ENCODE measurements at regions of chrX and their contacts with region 1.

Region 1: GRCh38 chrX:47193475-47194193 is at the start of gene UBA1:
- DNase-seq: peak; percentile 93
- ATAC-seq: peak; percentile 75
- H3K4me3 ChIP-seq: peak within 1 kb of the TSS; percentile 71 to 96 (median 76)
- H3K4me3 Mint-ChIP-seq: peak within 1 kb of the TSS; percentile 98
- H3K27ac ChIP-seq: peak within 1 kb of the TSS; percentile 83 to 95
- H3K27ac Mint-ChIP-seq: peak within 1 kb of the TSS; percentile 99
- H3K4me1 ChIP-seq: peaks cover 48 to 60% of the 10 kb centered on the region in 2 donors
- H3K4me1 Mint-ChIP-seq: peaks cover 63% of the 10 kb centered on the region
- H3K27me3 ChIP-seq: no peaks in the 10 kb centered on the region
- H3K27me3 Mint-ChIP-seq: no peaks in the 10 kb centered on the region
- CTCF ChIP-seq: peak; percentile 58
- total RNA-seq, gene UBA1: 166 and 173 TPM in 2 replicates

Region 2: DNA sequence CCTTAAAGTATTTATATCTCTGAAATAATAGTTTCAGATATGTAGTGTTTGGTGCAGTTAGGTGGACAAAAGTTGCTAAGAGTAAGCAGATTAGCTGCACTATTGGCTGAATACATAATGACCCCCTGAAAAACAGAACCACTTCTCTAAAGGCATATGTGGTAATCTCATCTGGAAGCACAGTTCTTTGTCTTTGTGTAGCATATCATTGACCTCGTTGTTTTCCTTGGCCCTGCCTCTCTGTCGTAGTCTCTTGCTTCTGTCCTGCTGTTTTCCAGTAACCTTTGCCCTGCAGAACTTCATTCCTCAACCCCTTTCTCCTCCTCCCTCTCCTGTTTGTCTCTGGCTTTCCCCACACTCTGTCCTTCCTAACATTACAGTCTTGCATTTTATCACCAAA is 240.0 kb before region 1 on chrX:
- CTCF ChIA-PET with region 1: no interaction called
- POLR2A ChIA-PET with region 1: no interaction called
- intact Hi-C with region 1: no loop called
- DNase-seq: peak; percentile 36
- ATAC-seq: peak; percentile 54
- H3K4me3 ChIP-seq: peak overlapping the region in 1 of 5 experiments; percentile 31
- H3K4me3 Mint-ChIP-seq: peak overlapping the region; percentile 76
- H3K27ac ChIP-seq: peak overlapping the region; percentile 65 to 74
- H3K27ac Mint-ChIP-seq: peak overlapping the region; percentile 85
- H3K4me1 ChIP-seq: peaks cover 33 to 53% of the 10 kb centered on the region in 2 donors
- H3K4me1 Mint-ChIP-seq: peaks cover 64% of the 10 kb centered on the region
- H3K27me3 ChIP-seq: no peaks in the 10 kb centered on the region
- H3K27me3 Mint-ChIP-seq: no peaks in the 10 kb centered on the region
- CTCF ChIP-seq: no peak

Region 3: DNA sequence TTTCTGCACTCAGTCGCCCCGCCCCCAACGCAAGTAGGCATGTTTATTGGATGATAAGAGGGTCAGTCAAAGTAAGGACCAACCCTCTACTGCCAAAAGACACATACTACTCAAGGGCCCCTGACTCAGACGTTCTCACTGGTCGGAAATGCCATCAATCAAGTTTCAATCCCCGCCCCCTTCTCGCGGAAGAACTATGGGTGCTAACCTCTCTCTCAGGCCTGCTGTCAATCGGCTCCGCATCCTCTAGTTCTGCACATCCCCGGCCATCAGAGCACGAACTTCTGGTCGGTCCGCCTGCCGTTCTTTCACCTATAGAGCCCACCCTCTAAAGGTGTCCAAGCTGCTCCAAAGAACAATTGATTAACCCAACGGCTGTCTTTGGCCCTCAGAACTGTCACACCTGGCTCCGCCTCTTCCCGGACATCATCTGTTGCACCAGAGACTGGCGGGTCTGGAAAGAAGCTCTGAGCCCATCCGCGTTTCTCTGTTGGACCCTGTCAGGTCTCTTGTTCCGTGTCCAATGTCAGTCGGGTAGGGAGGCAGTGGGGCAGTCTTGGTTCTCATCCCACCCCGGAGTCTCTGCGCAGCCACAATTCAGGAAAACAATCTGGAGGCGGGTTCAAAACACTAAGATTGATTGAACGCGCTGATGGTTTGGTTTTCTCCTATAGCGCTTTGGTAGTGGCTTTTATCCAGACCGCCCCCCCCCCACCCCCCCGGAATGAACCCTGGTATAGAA is 64.3 kb before region 1 on chrX:
- CTCF ChIA-PET with region 1: no interaction called
- POLR2A ChIA-PET with region 1: no interaction called
- intact Hi-C with region 1: loop called (anchors 1 kb)
- DNase-seq: peak; percentile 94
- ATAC-seq: peak; percentile 98
- H3K4me3 ChIP-seq: peak overlapping the region; percentile 32 to 71 (median 68)
- H3K4me3 Mint-ChIP-seq: peak overlapping the region; percentile 97
- H3K27ac ChIP-seq: peak overlapping the region; percentile 47
- H3K27ac Mint-ChIP-seq: peak overlapping the region; percentile 93
- H3K4me1 ChIP-seq: peaks cover 0 to 6% of the 10 kb centered on the region in 2 donors
- H3K4me1 Mint-ChIP-seq: peaks cover 3% of the 10 kb centered on the region
- H3K27me3 ChIP-seq: no peaks in the 10 kb centered on the region
- H3K27me3 Mint-ChIP-seq: no peaks in the 10 kb centered on the region
- CTCF ChIP-seq: no peak

Region 4: DNA sequence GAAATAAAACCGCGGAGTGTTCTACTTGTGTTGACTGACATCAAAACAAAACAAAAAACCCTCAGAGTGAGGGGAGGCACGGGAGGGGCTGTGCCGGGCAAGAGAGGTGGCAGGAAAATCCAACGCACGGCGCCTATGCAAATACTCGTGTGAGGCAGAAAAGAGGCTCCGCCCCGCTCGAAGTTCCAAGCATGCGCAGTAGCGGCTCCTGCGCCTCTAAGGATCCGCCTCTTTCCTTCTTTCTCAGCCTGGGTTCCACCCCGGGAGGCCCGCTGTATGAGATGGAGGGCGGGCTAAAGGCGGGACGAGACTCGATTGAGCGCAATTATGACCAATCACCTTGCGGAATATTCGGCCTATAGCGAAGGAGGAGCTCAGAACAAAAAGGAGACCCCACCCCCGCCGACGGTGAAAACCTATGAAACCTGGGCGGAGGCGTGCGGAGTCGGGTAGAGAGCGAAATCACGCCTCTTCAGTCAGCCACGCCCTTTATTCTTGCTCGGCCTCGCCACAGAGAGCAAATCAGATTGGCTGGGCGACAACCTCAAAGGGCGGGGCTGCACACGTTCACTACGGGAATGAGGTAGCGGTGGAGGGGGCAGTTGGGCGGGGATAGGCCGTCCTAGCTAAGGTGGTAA is 24.1 kb after region 1 on chrX:
- CTCF ChIA-PET with region 1: interaction called, 3 read pairs
- POLR2A ChIA-PET with region 1: interaction called, 4 read pairs
- intact Hi-C with region 1: loop called (anchors 1 kb)
- DNase-seq: peak; percentile 96
- ATAC-seq: peak; percentile 80
- H3K4me3 ChIP-seq: peak overlapping the region; percentile 69 to 83 (median 80)
- H3K4me3 Mint-ChIP-seq: peak overlapping the region; percentile 96
- H3K27ac ChIP-seq: peak overlapping the region; percentile 94 to 99
- H3K27ac Mint-ChIP-seq: peak overlapping the region; percentile 100
- H3K4me1 ChIP-seq: peaks cover 26 to 27% of the 10 kb centered on the region in 2 donors
- H3K4me1 Mint-ChIP-seq: peaks cover 39% of the 10 kb centered on the region
- H3K27me3 ChIP-seq: no peaks in the 10 kb centered on the region
- H3K27me3 Mint-ChIP-seq: no peaks in the 10 kb centered on the region
- CTCF ChIP-seq: no peak

Region 5: DNA sequence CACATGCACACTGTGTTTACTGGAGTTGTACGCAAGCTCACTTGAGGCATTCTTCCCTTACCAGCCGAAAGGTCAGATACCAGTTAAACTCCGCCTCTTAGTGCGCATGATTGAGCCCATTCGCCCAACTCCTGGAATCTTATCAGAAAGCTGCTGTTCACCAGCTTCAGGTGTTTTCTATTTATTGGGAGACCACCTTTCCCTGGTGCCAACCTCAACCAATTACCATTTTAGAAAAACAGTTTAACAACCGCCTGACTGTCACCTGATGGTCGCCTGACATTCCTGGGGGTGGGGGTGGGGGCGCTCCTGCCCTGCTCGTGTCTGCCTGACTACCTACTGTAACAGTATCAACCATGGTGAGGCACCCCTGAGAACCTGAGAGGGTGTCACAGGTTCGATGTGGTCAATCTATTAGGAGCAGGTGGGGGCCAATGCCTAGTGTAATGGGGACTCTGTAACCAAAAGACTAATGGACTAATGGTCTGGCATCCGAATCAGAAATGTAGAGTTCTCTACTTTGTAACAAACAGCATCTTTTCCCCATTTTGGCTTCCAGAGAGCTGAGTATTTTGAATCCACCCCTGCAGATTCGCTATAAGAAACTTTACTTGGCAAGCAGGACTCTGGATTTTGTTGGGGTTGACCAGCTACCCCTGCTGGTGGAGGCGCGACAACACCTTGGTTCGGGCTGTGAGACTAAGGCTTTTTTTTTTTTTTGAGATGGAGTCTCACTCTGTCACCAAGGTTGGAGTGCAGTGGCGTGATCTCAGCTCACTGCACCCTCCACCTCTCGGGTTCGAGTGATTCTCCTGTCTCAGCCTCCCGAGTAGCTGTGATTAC is 118.5 kb after region 1 on chrX:
- CTCF ChIA-PET with region 1: no interaction called
- POLR2A ChIA-PET with region 1: no interaction called
- intact Hi-C with region 1: loop called (anchors 5 kb)
- DNase-seq: peak; percentile 32
- ATAC-seq: no peak
- H3K4me3 ChIP-seq: no peak overlapping the region
- H3K4me3 Mint-ChIP-seq: no peak overlapping the region
- H3K27ac ChIP-seq: no peak overlapping the region
- H3K27ac Mint-ChIP-seq: no peak overlapping the region
- H3K4me1 ChIP-seq: no peaks in the 10 kb centered on the region
- H3K4me1 Mint-ChIP-seq: no peaks in the 10 kb centered on the region
- H3K27me3 ChIP-seq: no peaks in the 10 kb centered on the region
- H3K27me3 Mint-ChIP-seq: no peaks in the 10 kb centered on the region
- CTCF ChIP-seq: peak; percentile 13

Region 6: DNA sequence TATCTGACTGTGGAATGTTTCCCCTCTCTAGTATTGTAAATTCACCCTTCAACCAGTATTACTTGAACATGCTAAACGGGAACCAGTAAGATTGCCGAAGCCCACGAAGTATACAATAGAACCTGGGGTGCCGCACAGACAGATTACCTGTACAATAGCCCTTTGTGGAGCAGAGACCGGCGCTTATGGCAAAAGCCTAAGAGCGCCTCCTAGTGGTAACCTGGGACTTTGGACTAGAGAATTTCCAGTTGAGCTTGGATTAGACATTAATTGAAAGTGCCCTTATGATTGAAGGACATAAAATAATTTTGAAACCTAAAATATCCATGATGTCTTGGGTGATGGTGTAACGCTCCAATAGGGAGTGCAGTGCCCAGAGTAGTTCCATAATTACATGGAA is 190.9 kb after region 1 on chrX:
- CTCF ChIA-PET with region 1: interaction called, 22 read pairs
- POLR2A ChIA-PET with region 1: interaction called, 4 read pairs
- intact Hi-C with region 1: loop called (anchors 1 kb)
- DNase-seq: peak; percentile 80
- ATAC-seq: peak; percentile 76
- H3K4me3 ChIP-seq: no peak overlapping the region
- H3K4me3 Mint-ChIP-seq: no peak overlapping the region
- H3K27ac ChIP-seq: no peak overlapping the region
- H3K27ac Mint-ChIP-seq: no peak overlapping the region
- H3K4me1 ChIP-seq: peaks cover 0 to 8% of the 10 kb centered on the region in 2 donors
- H3K4me1 Mint-ChIP-seq: peaks cover 11% of the 10 kb centered on the region
- H3K27me3 ChIP-seq: no peaks in the 10 kb centered on the region
- H3K27me3 Mint-ChIP-seq: no peaks in the 10 kb centered on the region
- CTCF ChIP-seq: peak; percentile 78

Region 7: GRCh38 chrX:47523297-47523696 is 329.7 kb after region 1 on chrX:
- CTCF ChIA-PET with region 1: interaction called, 23 read pairs
- POLR2A ChIA-PET with region 1: interaction called, 3 read pairs
- intact Hi-C with region 1: loop called (anchors 1 kb)
- DNase-seq: peak; percentile 87
- ATAC-seq: peak; percentile 99
- H3K4me3 ChIP-seq: peak overlapping the region in 4 of 5 experiments; percentile 51 to 60 (median 57)
- H3K4me3 Mint-ChIP-seq: peak overlapping the region; percentile 71
- H3K27ac ChIP-seq: no peak overlapping the region
- H3K27ac Mint-ChIP-seq: peak overlapping the region; percentile 70
- H3K4me1 ChIP-seq: peaks cover 0 to 8% of the 10 kb centered on the region in 2 donors
- H3K4me1 Mint-ChIP-seq: peaks cover 5% of the 10 kb centered on the region
- H3K27me3 ChIP-seq: no peaks in the 10 kb centered on the region
- H3K27me3 Mint-ChIP-seq: no peaks in the 10 kb centered on the region
- CTCF ChIP-seq: peak; percentile 78

Region 8: GRCh38 chrX:47650164-47651042 is 456.8 kb after region 1 on chrX and contains the start of gene ELK1:
- CTCF ChIA-PET with region 1: no interaction called
- POLR2A ChIA-PET with region 1: no interaction called
- intact Hi-C with region 1: loop called (anchors 5 kb)
- DNase-seq: peak; percentile 94
- ATAC-seq: peak; percentile 91
- H3K4me3 ChIP-seq: peak within 1 kb of the TSS in 4 of 5 experiments; percentile 68 to 77 (median 75)
- H3K4me3 Mint-ChIP-seq: peak within 1 kb of the TSS; percentile 93
- H3K27ac ChIP-seq: peak within 1 kb of the TSS; percentile 69 to 73
- H3K27ac Mint-ChIP-seq: peak within 1 kb of the TSS; percentile 94
- H3K4me1 ChIP-seq: peaks cover 11 to 26% of the 10 kb centered on the region in 2 donors
- H3K4me1 Mint-ChIP-seq: peaks cover 29% of the 10 kb centered on the region
- H3K27me3 ChIP-seq: no peaks in the 10 kb centered on the region
- H3K27me3 Mint-ChIP-seq: no peaks in the 10 kb centered on the region
- CTCF ChIP-seq: no peak
- total RNA-seq, gene ELK1: 20.8 and 22.7 TPM in 2 replicates

Measured in B cell (primary cell).